Mammary epithelial cell (primary cell): ENCODE measurements at regions of chr1 and their contacts with region 1.

Region 1: GRCh38 chr1:32345289-32345827 is 9.3 kb upstream of the MARCKSL1 start:
- DNase-seq: no peak
- H3K4me3 ChIP-seq: no peak overlapping the region
- H3K27ac ChIP-seq: no peak overlapping the region
- H3K4me1 ChIP-seq: no peaks in the 10 kb centered on the region
- H3K27me3 ChIP-seq: no peaks in the 10 kb centered on the region
- CTCF ChIP-seq: no peak

Region 2: DNA sequence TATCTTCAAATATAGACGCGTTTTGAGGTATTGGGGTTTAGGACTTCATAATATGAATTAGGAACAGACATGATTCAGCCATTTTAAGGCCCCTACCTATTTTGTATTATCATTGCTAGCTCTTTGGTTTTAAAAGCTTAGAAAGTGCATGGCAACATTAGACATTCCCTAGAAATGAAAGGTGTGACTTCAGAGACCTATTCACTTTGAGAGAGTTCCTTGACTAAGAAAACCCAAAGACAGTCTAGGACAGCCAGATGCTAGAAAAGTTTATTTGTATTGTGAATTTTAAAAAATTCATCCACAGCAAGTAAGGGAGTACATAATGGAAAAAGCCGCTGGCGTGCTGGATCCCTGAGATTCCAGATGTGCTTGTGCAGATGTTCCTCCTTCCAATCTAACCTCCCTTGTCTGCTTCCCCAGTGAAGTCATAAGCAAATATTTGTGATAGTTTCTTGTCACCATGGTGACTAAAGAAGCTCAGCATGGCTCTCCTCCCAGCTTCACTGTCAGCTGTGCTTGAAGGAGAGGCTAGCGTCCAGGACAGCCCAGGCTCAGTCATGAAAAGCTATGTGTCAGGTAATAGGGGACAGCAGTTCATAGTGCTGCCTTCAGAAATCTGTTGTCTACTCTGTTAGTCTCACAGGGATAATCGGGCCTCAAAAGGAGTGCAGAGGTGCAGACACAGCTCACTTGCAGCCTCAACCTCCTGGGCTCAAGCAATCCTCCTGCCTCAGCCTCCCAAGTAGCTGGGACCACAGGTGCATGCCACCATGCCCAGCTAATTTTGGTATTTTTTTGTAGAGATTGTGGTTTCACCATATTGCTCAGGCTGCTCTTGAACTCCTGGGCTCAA is 202.7 kb before region 1 on chr1:
- CTCF ChIA-PET with region 1: interaction called, 13 read pairs
- dilution Hi-C with region 1: no loop called
- in situ Hi-C with region 1: no loop called
- intact Hi-C with region 1: no loop called
- DNase-seq: peak; percentile 44
- H3K4me3 ChIP-seq: no peak overlapping the region
- H3K27ac ChIP-seq: no peak overlapping the region
- H3K4me1 ChIP-seq: peaks cover 18% of the 10 kb centered on the region
- H3K27me3 ChIP-seq: no peaks in the 10 kb centered on the region
- CTCF ChIP-seq: no peak